ENCODE measurements at regions of chr7 and their contacts with region 1.

Region 1: DNA sequence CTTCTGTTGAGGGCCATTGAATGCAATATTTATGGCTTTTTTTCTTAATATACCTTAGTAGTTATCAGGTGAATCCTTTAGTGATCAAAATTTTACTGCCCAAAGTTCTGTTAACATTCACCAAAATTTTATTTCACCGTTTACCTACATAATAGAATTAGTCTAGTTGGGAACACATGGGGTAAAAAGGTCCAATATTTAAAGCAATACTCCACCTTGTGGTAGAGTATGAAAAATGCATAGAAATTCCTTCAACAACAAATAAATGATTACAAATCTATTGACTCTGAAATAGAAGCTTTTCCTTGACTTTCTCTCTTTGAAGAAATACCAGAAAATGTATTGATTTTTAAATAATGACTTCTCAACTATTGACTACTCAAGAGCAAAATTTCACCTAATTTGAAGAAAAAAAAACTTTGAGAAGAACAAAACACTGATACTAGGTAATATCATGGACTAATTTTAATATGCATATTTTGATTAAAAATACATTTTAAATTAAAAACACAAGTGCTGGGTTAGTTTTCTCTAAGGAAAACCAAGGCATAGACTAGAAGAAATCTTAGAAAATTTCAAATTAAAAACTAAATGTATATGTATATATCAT is 43.3 kb downstream of the POLR1F start:
- DNase-seq: peak; percentile 50
- ATAC-seq: peak; percentile 51; the same call in 1 of the 2 replicates
- H3K4me3 ChIP-seq: no peak overlapping the region
- H3K27ac ChIP-seq: no peak overlapping the region
- H3K4me1 ChIP-seq: peaks cover 12% of the 10 kb centered on the region
- H3K27me3 ChIP-seq: peaks cover 7% of the 10 kb centered on the region; the same call in 1 of the 2 replicates
- CTCF ChIP-seq: peak; percentile 77

Region 2: DNA sequence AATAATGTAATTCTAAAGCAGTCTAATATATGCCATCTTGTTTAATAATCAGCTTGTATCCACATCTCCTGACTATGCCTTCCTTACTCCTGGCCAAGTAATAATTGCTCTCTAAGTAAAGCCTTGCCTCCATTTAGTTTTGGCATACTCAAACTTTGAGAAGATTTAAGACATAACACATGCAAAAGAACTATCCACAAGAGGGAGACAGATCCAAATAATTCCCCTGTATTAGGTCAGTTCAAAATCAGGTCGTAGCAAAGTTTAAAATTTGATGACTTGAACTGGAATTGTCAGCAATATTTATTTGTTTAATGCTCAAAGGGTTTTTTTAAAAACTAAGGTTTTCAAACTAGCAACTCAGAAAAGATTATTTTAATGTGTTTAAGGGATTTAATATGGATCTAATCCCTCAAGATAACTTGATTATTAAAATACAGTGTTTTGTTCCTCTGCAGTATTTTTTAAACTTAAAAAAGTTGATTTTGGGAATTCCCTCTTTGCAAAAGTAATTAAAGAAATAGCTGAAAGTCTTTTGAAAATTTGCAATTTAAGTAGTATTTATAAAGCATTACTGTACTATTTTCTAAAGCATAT is 1074.7 kb before region 1 on chr7:
- CTCF ChIA-PET with region 1: no interaction called
- POLR2A ChIA-PET with region 1: no interaction called
- intact Hi-C with region 1: loop called (anchors 2 kb)
- DNase-seq: peak; percentile 56
- ATAC-seq: peak; percentile 75
- H3K4me3 ChIP-seq: no peak overlapping the region
- H3K27ac ChIP-seq: no peak overlapping the region
- H3K4me1 ChIP-seq: no peaks in the 10 kb centered on the region
- H3K27me3 ChIP-seq: no peaks in the 10 kb centered on the region
- CTCF ChIP-seq: peak; percentile 76

Region 3: GRCh38 chr7:18693406-18693805 is 972.1 kb before region 1 on chr7:
- CTCF ChIA-PET with region 1: no interaction called
- POLR2A ChIA-PET with region 1: no interaction called
- intact Hi-C with region 1: loop called (anchors 10 kb)
- DNase-seq: peak; percentile 71
- ATAC-seq: peak; percentile 87
- H3K4me3 ChIP-seq: no peak overlapping the region
- H3K27ac ChIP-seq: no peak overlapping the region
- H3K4me1 ChIP-seq: no peaks in the 10 kb centered on the region
- H3K27me3 ChIP-seq: no peaks in the 10 kb centered on the region
- CTCF ChIP-seq: peak; percentile 88

Region 4: GRCh38 chr7:19294619-19295018 is 370.9 kb before region 1 on chr7:
- CTCF ChIA-PET with region 1: no interaction called
- POLR2A ChIA-PET with region 1: no interaction called
- intact Hi-C with region 1: loop called (anchors 10 kb)
- DNase-seq: peak; percentile 87
- ATAC-seq: peak; percentile 91
- H3K4me3 ChIP-seq: no peak overlapping the region
- H3K27ac ChIP-seq: peak overlapping the region; percentile 10; the same call in 1 of the 2 replicates
- H3K4me1 ChIP-seq: peaks cover 12% of the 10 kb centered on the region
- H3K27me3 ChIP-seq: no peaks in the 10 kb centered on the region
- CTCF ChIP-seq: no peak

Region 5: GRCh38 chr7:19404912-19405329 is 260.6 kb before region 1 on chr7:
- CTCF ChIA-PET with region 1: no interaction called
- POLR2A ChIA-PET with region 1: no interaction called
- intact Hi-C with region 1: loop called (anchors 1 kb)
- DNase-seq: peak; percentile 96
- ATAC-seq: peak; percentile 96
- H3K4me3 ChIP-seq: peak overlapping the region; percentile 31; the same call in 1 of the 2 replicates
- H3K27ac ChIP-seq: peak overlapping the region; percentile 72
- H3K4me1 ChIP-seq: peaks cover 34% of the 10 kb centered on the region
- H3K27me3 ChIP-seq: no peaks in the 10 kb centered on the region
- CTCF ChIP-seq: no peak

Region 6: GRCh38 chr7:19442016-19442785 is 223.3 kb before region 1 on chr7:
- CTCF ChIA-PET with region 1: no interaction called
- POLR2A ChIA-PET with region 1: no interaction called
- intact Hi-C with region 1: loop called (anchors 2 kb)
- DNase-seq: peak; percentile 64
- ATAC-seq: peak; percentile 100
- H3K4me3 ChIP-seq: no peak overlapping the region
- H3K27ac ChIP-seq: no peak overlapping the region
- H3K4me1 ChIP-seq: no peaks in the 10 kb centered on the region
- H3K27me3 ChIP-seq: no peaks in the 10 kb centered on the region
- CTCF ChIP-seq: peak; percentile 80

Region 7: DNA sequence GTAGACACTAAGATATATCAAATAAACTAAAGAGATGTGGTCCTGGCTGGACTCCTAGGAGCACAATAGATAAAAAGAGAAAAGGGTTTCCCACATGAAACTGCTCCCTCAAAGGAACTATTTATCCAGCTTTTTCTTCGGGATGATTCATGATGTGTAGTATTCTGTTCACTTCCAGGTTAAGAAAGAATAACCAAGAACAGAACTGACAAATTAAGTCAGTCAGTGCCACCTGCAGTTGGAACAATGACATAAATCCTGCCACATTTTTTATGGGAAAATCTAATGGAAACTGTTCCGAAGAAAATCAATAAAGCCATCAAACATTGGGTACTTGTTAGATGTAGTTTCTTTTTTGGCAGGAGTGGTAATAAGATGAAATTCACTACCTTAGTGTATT is 43.8 kb before region 1 on chr7:
- CTCF ChIA-PET with region 1: no interaction called
- POLR2A ChIA-PET with region 1: no interaction called
- intact Hi-C with region 1: loop called (anchors 2 kb)
- DNase-seq: peak; percentile 72
- ATAC-seq: peak; percentile 94
- H3K4me3 ChIP-seq: 0 out of 2 replicates have a peak overlapping the region, but pooled peaks have one; percentile 19
- H3K27ac ChIP-seq: no peak overlapping the region
- H3K4me1 ChIP-seq: 0 out of 2 replicates have a peak, but pooled peaks cover 4% of the 10 kb centered on the region
- H3K27me3 ChIP-seq: peaks cover 12% of the 10 kb centered on the region; the same call in 1 of the 2 replicates
- CTCF ChIP-seq: peak; percentile 66

Measured in PC-3 (cell line).